ENCODE measurements at regions of chr19 and their contacts with region 1.

Region 1: DNA sequence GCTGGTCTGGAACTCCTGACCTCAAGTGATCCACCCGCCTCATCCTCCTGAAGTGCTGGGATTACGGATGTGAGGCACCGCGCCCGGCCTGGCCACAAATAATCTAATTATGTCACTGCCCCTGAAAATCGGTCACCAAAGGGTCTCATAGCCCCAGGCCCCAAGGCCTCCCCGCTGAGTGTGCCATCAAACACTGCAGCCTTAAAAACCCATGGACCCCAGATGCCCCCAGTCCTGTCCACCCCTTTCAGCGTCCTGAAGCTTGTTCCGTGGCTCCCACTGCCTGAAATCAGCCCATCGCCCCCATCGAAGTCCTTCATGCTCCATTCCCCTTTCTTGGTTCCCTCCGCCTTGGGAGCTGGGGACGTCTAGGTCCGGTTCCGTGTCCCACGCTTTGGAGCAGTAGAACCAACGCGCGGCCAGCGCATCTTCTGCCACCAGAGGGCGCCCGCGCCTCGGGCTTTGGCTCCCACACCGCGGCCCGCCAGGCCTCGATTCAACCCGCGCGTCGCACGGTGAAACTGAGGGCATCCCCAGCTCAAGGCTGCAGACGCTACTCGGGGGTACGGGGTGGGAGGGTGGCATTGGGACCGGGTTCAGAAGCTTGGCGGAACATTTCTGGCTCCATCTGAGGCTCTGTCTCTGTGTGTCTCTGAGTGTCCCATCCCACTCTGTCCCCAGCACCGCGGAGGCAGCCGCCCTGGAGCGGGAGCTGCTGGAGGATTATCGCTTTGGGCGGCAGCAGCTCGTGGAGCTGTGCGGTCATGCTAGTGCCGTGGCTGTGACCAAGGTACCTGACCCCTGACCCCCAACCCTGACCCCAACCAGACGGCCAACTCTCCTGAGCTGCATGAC is 3.5 kb downstream of the YJEFN3 start:
- DNase-seq: peak; percentile 81 to 87 (median 82)
- ATAC-seq: peak; percentile 74 to 91 (median 82)
- H3K4me3 ChIP-seq: no peak overlapping the region
- H3K27ac ChIP-seq: no peak overlapping the region
- H3K4me1 ChIP-seq: peaks cover 0 to 3% (median 0%) of the 10 kb centered on the region in 4 donors
- H3K27me3 ChIP-seq: no peaks in the 10 kb centered on the region
- CTCF ChIP-seq: peak; percentile 88 to 94 (median 92)
- POLR2A ChIP-seq: no peak

Region 2: DNA sequence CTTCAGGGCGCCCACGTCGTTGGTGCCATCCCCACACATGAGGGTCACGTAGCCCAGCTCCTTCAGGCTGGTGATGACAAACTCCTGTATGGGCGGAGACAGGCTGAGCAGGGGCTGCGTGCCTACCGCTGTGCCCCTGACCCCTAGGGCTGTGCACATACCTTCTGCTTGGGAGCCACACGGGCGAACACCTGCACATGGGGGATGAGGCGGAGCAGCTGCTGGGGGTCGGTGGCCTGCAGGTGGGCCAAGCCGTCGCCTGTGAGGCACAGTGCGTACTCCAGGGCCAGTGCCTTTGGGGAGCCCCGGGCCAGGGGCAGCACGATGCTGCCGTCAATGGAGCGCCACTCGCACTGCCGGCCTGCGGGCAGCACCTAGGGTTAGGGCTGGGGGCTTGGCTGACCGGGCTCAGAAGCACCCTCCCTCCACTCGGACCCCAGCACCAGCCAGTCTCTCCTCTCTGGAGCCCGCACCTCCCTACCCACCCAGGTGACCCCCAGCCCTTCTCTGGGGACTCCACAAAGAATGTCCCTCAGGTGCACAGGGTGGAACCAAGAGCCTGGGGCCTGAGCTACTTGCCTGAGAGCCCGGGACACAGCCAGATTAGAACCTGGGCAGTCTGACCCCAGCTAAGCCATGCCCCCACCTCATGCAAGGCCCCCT is 117.5 kb after region 1 on chr19:
- intact Hi-C with region 1: loop called (anchors 5 kb)
- DNase-seq: no peak
- ATAC-seq: no peak
- H3K4me3 ChIP-seq: no peak overlapping the region
- H3K27ac ChIP-seq: no peak overlapping the region
- H3K4me1 ChIP-seq: no peaks in the 10 kb centered on the region
- H3K27me3 ChIP-seq: no peaks in the 10 kb centered on the region
- CTCF ChIP-seq: no peak
- POLR2A ChIP-seq: no peak

Measured in right lobe of liver (tissue), 6 donors.